ENCODE measurements at regions of chr17 and their contacts with region 1.

Region 1: DNA sequence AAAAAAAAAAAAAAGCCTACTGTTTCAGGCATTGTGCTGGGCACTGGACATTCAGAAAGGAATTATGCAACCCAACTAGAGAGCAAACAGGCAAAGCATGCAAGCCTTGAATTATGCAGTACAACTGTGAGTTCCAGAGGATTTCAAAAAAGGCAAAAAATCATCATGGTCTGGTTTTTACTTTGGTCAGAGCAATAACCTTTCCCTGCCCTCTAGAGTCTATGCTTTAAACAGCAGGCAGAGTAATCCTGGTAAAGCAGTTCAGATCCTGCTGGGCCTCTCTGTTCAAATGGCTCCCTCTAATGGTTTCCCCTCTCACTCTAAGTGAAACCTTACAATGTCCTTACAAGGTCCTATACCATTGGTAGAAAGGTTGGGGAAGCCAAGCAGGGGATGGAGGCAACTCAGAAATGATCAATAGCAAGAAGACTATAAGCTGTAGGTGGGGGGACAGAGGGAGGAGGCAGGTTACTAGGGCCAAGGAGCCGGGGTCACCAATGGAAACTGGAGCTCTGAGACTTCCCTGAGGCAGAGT is 4.6 kb upstream of the TAF15 start:
- DNase-seq: no peak
- ATAC-seq: peak; percentile 74

Region 2: DNA sequence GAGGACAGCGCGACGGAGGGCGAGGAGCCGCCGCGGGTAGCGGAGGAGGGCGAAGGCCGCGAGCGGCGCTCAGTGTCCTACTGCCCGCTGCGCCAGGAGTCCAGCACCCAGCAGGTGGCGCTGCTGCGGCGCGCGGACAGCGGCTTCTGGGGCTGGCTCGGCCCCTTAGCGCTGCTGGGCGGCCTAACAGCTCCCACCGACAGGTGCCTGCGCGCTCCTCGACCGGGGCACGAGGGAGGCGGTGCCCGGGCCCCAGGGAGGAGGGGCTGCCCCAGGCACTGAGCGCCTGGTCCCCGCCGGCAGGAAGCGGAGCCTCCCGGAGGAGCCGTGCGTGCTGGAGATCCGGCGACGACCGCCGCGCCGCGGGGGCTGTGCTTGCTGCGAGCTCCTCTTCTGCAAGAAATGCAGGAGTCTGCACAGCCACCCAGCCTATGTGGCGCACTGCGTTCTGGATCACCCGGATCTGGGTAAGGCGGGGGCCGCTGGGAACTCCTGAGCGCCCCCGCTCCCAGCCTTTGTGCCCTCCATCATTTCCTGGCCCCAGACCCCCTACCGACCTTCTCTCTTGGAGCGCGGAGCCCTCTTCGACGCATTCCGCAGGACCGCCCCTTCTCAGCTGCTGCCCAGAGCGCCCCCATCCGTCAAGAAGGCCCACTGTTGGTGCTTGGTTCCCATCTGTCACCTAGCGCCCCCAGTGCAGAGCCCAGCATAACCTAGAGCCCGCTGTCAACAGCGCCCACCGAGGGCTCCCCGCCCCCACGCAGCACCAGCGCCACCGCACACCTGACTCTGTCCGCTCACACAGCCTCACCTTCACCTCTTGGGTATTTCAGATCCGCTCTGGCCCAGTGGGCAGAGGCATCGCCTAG is 40.4 kb before region 1 on chr17:
- intact Hi-C with region 1: loop called (anchors 2 kb)
- DNase-seq: peak; percentile 91
- ATAC-seq: peak; percentile 90

Measured in sciatic nerve (tissue), 2 donors.